Head of caudate nucleus (tissue), 42 donors: ENCODE measurements at regions of chr17 and their contacts with region 1.

Region 1: GRCh38 chr17:81959362-81960129 is 1.4 kb downstream of the NOTUM start:
- DNase-seq: peak in 41 of 42 donors; percentile 37 to 90 (median 78)

Region 2: GRCh38 chr17:81911277-81911961 is 48.1 kb before region 1 on chr17 and contains the start of gene PCYT2:
- intact Hi-C with region 1: no loop called
- DNase-seq: peak; percentile 83 to 97 (median 95)

Region 3: DNA sequence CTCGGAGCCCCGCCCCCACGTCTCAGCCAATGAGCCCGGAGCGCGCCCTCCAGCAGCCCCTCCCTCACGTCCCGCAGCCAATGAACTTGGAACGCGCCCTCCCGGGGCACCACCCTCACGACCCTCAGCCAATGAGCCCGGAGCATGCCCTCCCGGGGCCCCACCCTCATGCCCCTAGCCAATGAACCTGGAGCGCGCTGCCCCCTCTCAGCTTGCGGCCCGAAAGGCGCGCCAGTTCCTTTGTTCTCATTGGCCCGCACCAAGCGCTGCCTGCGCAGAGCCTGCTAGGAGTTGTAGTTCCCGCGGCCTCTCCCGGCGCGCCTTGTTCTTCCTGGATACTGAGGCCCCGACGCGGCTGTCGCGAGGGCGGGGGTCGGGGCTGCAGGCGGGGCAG is 63.4 kb after region 1 on chr17 and contains the start of gene LRRC45:
- intact Hi-C with region 1: loop called (anchors 5 kb)
- DNase-seq: peak; percentile 99 to 100 (median 100)

Region 4: GRCh38 chr17:82153745-82154375 is 194.3 kb after region 1 on chr17:
- intact Hi-C with region 1: loop called (anchors 10 kb)
- DNase-seq: peak; percentile 57 to 92 (median 80)